Heart right ventricle (tissue), 16 donors: ENCODE measurements at regions of chr3 and their contacts with region 1.

Region 1: GRCh38 chr3:149473357-149474249 is 894 bp upstream of the TM4SF4 start:
- DNase-seq: no peak
- ATAC-seq: peak in 6 of 8 donors; percentile 29 to 71 (median 44)
- H3K4me3 ChIP-seq: no peak overlapping the region
- H3K27ac ChIP-seq: no peak overlapping the region
- H3K4me1 ChIP-seq: peaks cover 0 to 42% (median 9%) of the 10 kb centered on the region in 9 donors
- H3K27me3 ChIP-seq: no peaks in the 10 kb centered on the region
- CTCF ChIP-seq: no peak

Region 2: DNA sequence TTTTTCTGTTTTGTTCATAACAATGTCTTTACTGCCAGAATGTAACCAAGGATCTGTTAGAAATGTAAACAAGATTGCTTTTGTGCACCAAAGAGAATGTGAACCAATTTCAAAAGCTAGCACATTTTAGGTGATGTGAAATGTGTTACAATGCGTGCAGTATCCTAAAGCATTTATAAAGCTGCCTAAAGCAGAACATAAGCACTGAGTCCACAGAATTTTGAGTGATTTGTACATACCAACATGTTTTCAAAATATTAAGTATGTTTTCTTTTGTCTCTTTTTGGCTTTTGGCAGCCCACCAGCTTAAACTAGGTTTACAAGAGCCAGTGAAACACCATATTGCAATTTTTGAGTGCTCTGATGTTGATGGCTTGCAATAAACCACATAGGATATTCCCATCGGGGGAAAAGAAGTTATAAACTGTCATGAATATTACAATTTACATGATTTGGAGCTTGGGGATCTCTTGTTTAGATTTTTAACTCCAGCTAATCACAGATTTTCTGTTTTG is 1700.4 kb before region 1 on chr3:
- intact Hi-C with region 1: loop called in 1 of 10 experiments (anchors 5 kb)
- DNase-seq: no peak
- ATAC-seq: no peak
- H3K4me3 ChIP-seq: no peak overlapping the region
- H3K27ac ChIP-seq: no peak overlapping the region
- H3K4me1 ChIP-seq: no peaks in the 10 kb centered on the region
- H3K27me3 ChIP-seq: no peaks in the 10 kb centered on the region
- CTCF ChIP-seq: no peak

Region 3: DNA sequence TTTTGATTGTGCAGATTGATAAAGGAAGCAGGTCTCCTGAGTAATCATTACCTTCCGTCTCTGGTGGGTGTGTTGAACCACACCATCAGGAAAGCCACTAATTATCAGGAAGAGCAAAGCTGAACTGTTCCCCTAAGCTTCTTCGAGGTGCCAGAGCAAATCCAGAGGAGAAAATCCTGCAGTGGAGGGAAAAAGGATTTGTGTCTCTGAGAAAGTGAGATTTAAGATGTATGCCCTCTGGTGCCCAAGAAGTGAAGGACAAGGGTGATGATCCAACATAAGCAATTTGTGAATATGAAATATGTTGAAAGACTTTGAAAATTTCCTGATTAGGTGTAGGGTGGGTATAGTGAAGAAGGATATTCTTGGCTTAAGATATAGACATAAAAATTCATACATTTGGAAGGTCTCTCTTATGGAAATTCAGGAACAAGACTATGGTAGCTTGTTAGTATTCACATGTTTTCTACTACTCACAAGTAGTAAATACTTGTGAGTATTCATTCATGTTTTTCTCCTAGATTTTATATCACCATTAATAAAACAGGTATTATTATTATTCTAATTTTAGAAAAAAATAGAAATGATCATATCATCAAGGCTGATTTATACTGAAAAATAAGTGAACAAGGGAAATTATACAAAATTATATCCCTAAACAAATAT is 243.9 kb after region 1 on chr3:
- intact Hi-C with region 1: no loop called
- DNase-seq: peak in 1 of 2 donors; percentile 66
- ATAC-seq: peak in 7 of 8 donors; percentile 51 to 79 (median 72)
- H3K4me3 ChIP-seq: peak overlapping the region in 3 of 10 donors; percentile 15 to 31 (median 25)
- H3K27ac ChIP-seq: peak overlapping the region in 3 of 10 donors; percentile 3 to 35 (median 29)
- H3K4me1 ChIP-seq: peaks cover 0 to 10% (median 3%) of the 10 kb centered on the region in 9 donors
- H3K27me3 ChIP-seq: no peaks in the 10 kb centered on the region
- CTCF ChIP-seq: peak; percentile 54 to 87 (median 77)